CD8-positive, alpha-beta T cell (primary cell): ENCODE measurements at regions of chr3 and their contacts with region 1.

Region 1: DNA sequence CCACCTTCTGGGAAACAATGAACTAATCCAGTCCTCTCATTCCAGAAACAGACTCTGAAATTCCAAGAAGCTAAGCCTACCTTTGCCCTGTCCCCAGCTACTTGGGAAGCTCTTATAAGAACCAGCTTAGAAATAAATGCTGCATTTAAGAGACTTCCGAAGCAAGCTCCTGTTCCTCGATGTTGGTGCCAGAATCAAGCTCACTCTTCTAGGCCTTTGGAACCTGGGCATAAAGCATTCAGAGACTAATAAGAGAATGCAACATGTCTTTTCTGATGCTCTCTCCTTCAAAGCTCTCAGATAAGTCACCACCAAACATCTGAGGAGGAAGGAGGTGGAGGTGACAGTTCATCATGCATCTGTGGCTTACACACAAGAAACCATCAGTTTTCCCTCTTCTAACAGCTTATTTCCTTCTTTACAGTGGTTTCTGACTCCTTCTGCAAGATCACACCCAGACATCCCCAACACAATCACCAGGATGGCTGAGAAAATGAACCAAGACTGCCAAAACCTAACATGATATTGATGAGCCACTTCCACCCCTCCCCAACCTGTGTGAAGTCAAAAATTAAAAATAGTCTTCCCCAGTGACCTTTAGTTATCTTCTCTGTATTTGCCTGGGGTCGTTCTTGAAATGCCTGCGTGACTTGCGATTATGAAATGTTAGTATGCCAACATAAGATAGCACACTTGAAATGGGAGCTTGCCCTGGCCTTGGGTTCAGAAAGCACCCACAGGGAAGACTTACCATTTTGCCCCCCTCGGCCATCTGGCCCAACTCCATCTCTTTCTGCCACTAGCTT is 11.5 kb downstream of the ARHGEF3 start:
- DNase-seq: peak in 6 of 9 experiments; percentile 36 to 84 (median 55)
- ATAC-seq: peak; percentile 57
- H3K4me3 ChIP-seq: peak overlapping the region in 1 of 2 experiments; percentile 19
- H3K4me3 Mint-ChIP-seq: peak overlapping the region; percentile 58
- H3K27ac ChIP-seq: peak overlapping the region; percentile 46 to 80
- H3K27ac Mint-ChIP-seq: peak overlapping the region; percentile 88
- H3K4me1 ChIP-seq: peaks cover 93% of the 10 kb centered on the region
- H3K4me1 Mint-ChIP-seq: peaks cover 90% of the 10 kb centered on the region
- H3K27me3 ChIP-seq: no peaks in the 10 kb centered on the region
- H3K27me3 Mint-ChIP-seq: no peaks in the 10 kb centered on the region
- CTCF ChIP-seq: no peak

Region 2: GRCh38 chr3:56556908-56557830 is 233.1 kb before region 1 on chr3 and contains the start of gene CCDC66:
- CTCF ChIA-PET with region 1: no interaction called
- POLR2A ChIA-PET with region 1: no interaction called
- intact Hi-C with region 1: no loop called
- DNase-seq: peak; percentile 88 to 96 (median 94)
- ATAC-seq: peak; percentile 89
- H3K4me3 ChIP-seq: peak within 1 kb of the TSS; percentile 70 to 78
- H3K4me3 Mint-ChIP-seq: peak within 1 kb of the TSS; percentile 100
- H3K27ac ChIP-seq: peak within 1 kb of the TSS; percentile 91 to 93
- H3K27ac Mint-ChIP-seq: peak within 1 kb of the TSS; percentile 100
- H3K4me1 ChIP-seq: peaks cover 22% of the 10 kb centered on the region
- H3K4me1 Mint-ChIP-seq: peaks cover 32% of the 10 kb centered on the region
- H3K27me3 ChIP-seq: no peaks in the 10 kb centered on the region
- H3K27me3 Mint-ChIP-seq: no peaks in the 10 kb centered on the region
- CTCF ChIP-seq: peak; percentile 83
- total RNA-seq, gene CCDC66: 63.9 to 65.4 TPM

Region 3: DNA sequence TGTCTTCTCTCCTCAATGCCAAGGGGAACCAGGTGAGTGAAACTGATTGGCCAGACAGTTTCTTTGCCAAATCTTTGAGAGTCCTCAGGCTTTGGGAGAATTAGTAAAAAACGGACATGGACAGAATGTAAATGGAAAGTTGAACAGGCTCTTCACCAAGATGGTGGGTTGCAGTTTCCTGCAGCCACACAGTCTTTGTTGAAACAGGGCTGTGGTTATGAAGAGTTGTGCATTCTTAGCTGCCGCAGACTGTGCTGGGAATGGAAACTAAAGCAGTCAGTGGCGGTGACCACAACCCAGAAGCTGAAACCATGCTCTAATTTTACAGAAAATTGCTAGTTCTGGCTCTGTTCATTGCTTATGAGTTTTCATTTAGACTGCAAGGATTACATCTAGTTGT is 65.0 kb before region 1 on chr3:
- CTCF ChIA-PET with region 1: no interaction called
- POLR2A ChIA-PET with region 1: interaction called, 11 read pairs
- intact Hi-C with region 1: loop called in 1 of 2 experiments (anchors 2 kb)
- DNase-seq: peak; percentile 25 to 86 (median 66)
- ATAC-seq: peak; percentile 89
- H3K4me3 ChIP-seq: no peak overlapping the region
- H3K4me3 Mint-ChIP-seq: peak overlapping the region; percentile 65
- H3K27ac ChIP-seq: peak overlapping the region in 1 of 2 experiments; percentile 43
- H3K27ac Mint-ChIP-seq: peak overlapping the region; percentile 92
- H3K4me1 ChIP-seq: peaks cover 46% of the 10 kb centered on the region
- H3K4me1 Mint-ChIP-seq: peaks cover 64% of the 10 kb centered on the region
- H3K27me3 ChIP-seq: no peaks in the 10 kb centered on the region
- H3K27me3 Mint-ChIP-seq: no peaks in the 10 kb centered on the region
- CTCF ChIP-seq: no peak